ENCODE measurements at regions of chr9 and their contacts with region 1.

Region 1: DNA sequence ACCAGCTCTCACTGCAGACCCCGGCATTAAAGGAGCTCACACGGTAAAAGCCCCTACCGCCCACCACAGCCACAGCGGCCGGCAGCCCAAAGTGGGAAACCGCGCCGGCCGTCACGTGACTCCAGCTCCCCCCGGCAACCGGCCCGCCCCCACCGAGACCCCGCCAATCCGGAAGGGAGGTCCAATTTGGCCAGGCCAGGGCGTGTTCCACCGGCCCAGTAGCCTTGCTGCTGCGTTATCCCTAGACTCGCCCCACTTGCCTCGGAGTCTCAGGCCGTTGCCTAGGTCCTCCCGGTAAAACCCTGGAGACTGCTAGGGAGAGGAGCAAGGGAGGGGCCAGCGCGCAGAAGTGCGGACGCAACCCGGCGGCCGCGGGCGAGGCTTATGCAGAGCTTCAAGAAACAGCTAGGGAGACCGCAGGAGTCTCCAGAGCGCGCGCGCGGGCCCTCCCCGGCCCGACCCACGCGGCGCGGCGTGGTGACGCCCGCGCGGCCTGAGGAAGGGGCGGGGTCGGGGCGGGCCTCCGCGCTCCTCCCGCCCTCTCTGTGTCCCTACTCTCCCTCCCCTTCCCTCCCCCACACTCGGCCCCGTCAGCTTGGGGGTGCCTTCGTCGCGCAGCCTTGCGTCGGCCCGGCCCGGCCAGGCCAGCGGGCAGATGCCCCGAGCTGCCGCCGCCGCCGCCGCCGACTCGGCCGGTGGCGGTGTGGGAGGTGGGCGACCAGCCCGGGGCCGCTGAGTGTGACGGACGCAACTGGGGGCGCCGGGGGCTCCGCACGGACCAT is at the start of gene RIC1:
- DNase-seq: peak; percentile 76 to 94 (median 85)
- ATAC-seq: peak; percentile 86 to 91 (median 86)
- H3K4me3 ChIP-seq: peak within 1 kb of the TSS; percentile 79 to 81
- H3K4me3 Mint-ChIP-seq: peak within 1 kb of the TSS; percentile 99 to 100 (median 99)
- H3K27ac ChIP-seq: peak within 1 kb of the TSS; percentile 78
- H3K27ac Mint-ChIP-seq: peak within 1 kb of the TSS; percentile 98 to 99
- H3K4me1 ChIP-seq: peaks cover 30 to 40% of the 10 kb centered on the region in 2 experiments
- H3K4me1 Mint-ChIP-seq: peaks cover 64 to 75% (median 69%) of the 10 kb centered on the region in 3 donors
- H3K27me3 ChIP-seq: no peaks in the 10 kb centered on the region
- H3K27me3 Mint-ChIP-seq: no peaks in the 10 kb centered on the region
- total RNA-seq, gene RIC1: 22.2 to 29.9 (median 22.9) TPM

Region 2: GRCh38 chr9:4792572-4793458 is 835.9 kb before region 1 on chr9 and contains the start of gene RCL1:
- CTCF ChIA-PET with region 1: interaction called in 1 of 2 experiments, 13 read pairs
- POLR2A ChIA-PET with region 1: no interaction called
- DNase-seq: peak; percentile 84 to 98 (median 95)
- ATAC-seq: peak; percentile 92 to 95 (median 92)
- H3K4me3 ChIP-seq: peak within 1 kb of the TSS; percentile 74 to 97
- H3K4me3 Mint-ChIP-seq: peak within 1 kb of the TSS; percentile 95 to 96 (median 95)
- H3K27ac ChIP-seq: peak within 1 kb of the TSS; percentile 83
- H3K27ac Mint-ChIP-seq: peak within 1 kb of the TSS; percentile 92
- H3K4me1 ChIP-seq: peaks cover 9 to 21% of the 10 kb centered on the region in 2 experiments
- H3K4me1 Mint-ChIP-seq: peaks cover 41 to 53% (median 47%) of the 10 kb centered on the region in 3 donors
- H3K27me3 ChIP-seq: peaks cover 0 to 5% of the 10 kb centered on the region in 2 experiments
- H3K27me3 Mint-ChIP-seq: no peaks in the 10 kb centered on the region
- total RNA-seq, gene RCL1: 22.0 to 38.7 (median 24.2) TPM

Region 3: GRCh38 chr9:5450359-5451091 is 178.2 kb before region 1 on chr9 and contains the start of gene CD274:
- CTCF ChIA-PET with region 1: interaction called in 1 of 2 experiments, 16 read pairs
- POLR2A ChIA-PET with region 1: interaction called in 1 of 2 experiments, 4 read pairs
- DNase-seq: peak; percentile 50 to 87 (median 68)
- ATAC-seq: peak; percentile 94 to 97 (median 95)
- H3K4me3 ChIP-seq: peak within 1 kb of the TSS; percentile 71 to 85
- H3K4me3 Mint-ChIP-seq: peak within 1 kb of the TSS; percentile 91 to 96 (median 93)
- H3K27ac ChIP-seq: peak within 1 kb of the TSS; percentile 98
- H3K27ac Mint-ChIP-seq: peak within 1 kb of the TSS; percentile 91 to 99
- H3K4me1 ChIP-seq: peaks cover 4 to 23% of the 10 kb centered on the region in 2 experiments
- H3K4me1 Mint-ChIP-seq: peaks cover 68 to 77% (median 68%) of the 10 kb centered on the region in 3 donors
- H3K27me3 ChIP-seq: no peaks in the 10 kb centered on the region
- H3K27me3 Mint-ChIP-seq: no peaks in the 10 kb centered on the region
- total RNA-seq, gene CD274: 6.6 to 11.4 (median 7.2) TPM

Region 4: GRCh38 chr9:5931657-5932056 is 302.9 kb after region 1 on chr9:
- CTCF ChIA-PET with region 1: no interaction called
- POLR2A ChIA-PET with region 1: no interaction called
- DNase-seq: no peak
- ATAC-seq: no peak
- H3K4me3 ChIP-seq: no peak overlapping the region
- H3K4me3 Mint-ChIP-seq: no peak overlapping the region
- H3K27ac ChIP-seq: no peak overlapping the region
- H3K27ac Mint-ChIP-seq: no peak overlapping the region
- H3K4me1 ChIP-seq: no peaks in the 10 kb centered on the region
- H3K4me1 Mint-ChIP-seq: peaks cover 0 to 4% (median 0%) of the 10 kb centered on the region in 3 donors
- H3K27me3 ChIP-seq: no peaks in the 10 kb centered on the region
- H3K27me3 Mint-ChIP-seq: no peaks in the 10 kb centered on the region

Region 5: DNA sequence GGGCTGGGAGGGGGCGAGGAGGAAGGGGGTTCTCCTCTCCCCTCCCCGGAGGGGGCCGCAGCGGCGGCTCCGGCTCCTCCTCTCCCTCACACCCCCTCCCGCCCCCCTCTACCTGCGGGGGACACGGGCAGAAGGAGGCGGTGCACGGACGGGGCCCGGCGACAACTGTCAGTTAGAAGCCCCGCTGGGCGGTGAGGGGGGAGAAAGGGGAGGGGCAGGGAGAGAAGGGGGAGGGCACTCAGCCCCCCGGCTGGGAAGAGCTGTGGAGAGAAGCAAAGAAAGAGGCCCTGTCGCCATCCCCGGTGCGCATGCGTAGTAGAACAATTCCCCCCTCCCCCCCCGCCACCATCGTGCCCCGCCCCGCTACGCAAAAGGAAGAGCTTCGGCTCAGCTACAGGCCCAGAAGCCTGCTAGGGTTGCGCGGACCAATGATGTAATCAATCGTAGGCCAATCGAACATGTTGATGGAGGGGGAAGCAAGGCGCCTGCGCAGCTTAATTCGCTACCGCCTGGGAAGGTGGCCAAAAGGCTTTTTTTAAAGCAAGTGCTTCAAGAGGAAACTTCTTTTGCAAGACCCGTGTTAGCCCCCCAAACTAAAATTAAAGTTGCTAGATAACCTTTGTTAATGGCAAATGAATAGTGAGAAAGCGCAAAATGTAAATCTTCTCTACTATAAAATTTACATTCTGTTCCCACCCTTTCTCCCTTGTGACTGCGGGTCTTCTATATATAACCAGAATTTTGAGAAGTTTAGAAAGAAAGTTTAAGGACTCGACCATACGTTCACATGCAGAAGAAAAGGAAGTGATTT is 379.7 kb after region 1 on chr9:
- CTCF ChIA-PET with region 1: no interaction called
- POLR2A ChIA-PET with region 1: interaction called, 3 to 14 read pairs
- DNase-seq: peak; percentile 78 to 98 (median 95)
- ATAC-seq: peak; percentile 72 to 77 (median 73)
- H3K4me3 ChIP-seq: peak overlapping the region in 1 of 2 donors; percentile 91
- H3K4me3 Mint-ChIP-seq: peak overlapping the region; percentile 77 to 95 (median 77)
- H3K27ac ChIP-seq: peak overlapping the region; percentile 95
- H3K27ac Mint-ChIP-seq: peak overlapping the region; percentile 85 to 88
- H3K4me1 ChIP-seq: peaks cover 13 to 16% of the 10 kb centered on the region in 2 experiments
- H3K4me1 Mint-ChIP-seq: peaks cover 49 to 70% (median 60%) of the 10 kb centered on the region in 3 donors
- H3K27me3 ChIP-seq: no peaks in the 10 kb centered on the region
- H3K27me3 Mint-ChIP-seq: no peaks in the 10 kb centered on the region